ENCODE measurements at regions of chr9 and their contacts with region 1.

Region 1: DNA sequence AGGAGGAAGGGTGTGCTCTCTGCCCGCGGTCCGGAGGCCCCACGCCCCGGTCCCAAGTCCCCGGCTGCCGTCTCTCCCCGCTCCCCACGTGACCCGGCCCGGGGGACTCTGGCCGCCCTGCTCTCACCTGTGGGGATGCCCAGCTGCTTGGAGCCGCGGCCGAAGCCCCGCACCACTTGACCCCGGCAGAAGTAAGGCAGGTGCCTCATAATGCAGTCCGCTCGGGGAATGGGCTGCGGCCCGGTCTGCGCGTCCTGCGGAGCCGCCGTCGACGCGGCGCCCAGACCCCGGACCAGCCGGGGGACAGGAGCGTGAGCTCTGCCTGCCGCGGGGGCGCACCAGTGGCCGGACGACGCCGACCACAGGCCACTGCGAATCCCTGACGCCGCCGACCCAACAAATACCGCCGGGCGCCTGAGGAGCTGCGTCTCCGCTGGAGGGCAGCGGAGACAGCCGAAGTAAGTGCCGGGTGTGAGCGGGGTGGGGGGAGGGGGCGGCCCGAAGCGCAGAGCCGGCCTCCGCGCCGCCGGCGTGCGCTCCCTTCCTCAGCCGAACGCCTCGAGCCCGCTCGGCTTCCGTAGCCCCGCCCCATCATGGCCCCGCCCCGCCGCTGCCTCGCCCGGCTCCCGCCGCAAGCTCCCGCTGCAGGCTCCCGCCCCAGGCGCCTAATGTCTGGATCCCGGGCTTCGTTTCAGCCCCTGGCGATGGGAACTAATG is at the start of gene RFK:
- DNase-seq: peak; percentile 89
- H3K4me3 Mint-ChIP-seq: peak within 1 kb of the TSS; percentile 100
- H3K27ac Mint-ChIP-seq: peak within 1 kb of the TSS; percentile 100
- H3K4me1 Mint-ChIP-seq: peaks cover 26% of the 10 kb centered on the region
- H3K27me3 Mint-ChIP-seq: no peaks in the 10 kb centered on the region
- total RNA-seq, gene RFK: 14.9 and 17.1 TPM in 2 replicates

Region 2: DNA sequence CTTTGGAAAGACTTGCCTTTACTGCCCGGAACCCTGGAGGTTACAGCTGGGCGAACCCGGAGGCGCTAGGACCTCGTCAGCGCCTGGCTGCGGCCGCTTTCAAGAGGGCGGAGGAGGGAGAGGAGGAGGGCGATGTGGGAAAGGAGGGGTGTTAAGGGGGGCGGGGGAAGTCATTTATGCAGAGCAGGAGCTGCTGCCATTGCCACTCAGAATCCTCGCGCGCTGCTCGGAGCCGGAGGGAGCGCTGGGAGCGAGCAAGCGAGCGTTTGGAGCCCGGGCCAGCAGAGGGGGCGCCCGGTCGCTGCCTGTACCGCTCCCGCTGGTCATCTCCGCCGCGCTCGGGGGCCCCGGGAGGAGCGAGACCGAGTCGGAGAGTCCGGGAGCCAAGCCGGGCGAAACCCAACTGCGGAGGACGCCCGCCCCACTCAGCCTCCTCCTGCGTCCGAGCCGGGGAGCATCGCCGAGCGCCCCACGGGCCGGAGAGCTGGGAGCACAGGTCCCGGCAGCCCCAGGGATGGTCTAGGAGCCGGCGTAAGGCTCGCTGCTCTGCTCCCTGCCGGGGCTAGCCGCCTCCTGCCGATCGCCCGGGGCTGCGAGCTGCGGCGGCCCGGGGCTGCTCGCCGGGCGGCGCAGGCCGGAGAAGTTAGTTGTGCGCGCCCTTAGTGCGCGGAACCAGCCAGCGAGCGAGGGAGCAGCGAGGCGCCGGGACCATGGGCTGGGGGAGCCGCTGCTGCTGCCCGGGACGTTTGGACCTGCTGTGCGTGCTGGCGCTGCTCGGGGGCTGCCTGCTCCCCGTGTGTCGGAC is 503.4 kb before region 1 on chr9 and contains the start of gene PCSK5:
- intact Hi-C with region 1: loop called (anchors 2 kb)
- DNase-seq: peak; percentile 77
- H3K4me3 Mint-ChIP-seq: peak within 1 kb of the TSS; percentile 92
- H3K27ac Mint-ChIP-seq: peak within 1 kb of the TSS; percentile 32
- H3K4me1 Mint-ChIP-seq: peaks cover 24% of the 10 kb centered on the region
- H3K27me3 Mint-ChIP-seq: peaks cover 55% of the 10 kb centered on the region
- total RNA-seq, gene PCSK5: 1.5 TPM in 2 replicates

Region 3: DNA sequence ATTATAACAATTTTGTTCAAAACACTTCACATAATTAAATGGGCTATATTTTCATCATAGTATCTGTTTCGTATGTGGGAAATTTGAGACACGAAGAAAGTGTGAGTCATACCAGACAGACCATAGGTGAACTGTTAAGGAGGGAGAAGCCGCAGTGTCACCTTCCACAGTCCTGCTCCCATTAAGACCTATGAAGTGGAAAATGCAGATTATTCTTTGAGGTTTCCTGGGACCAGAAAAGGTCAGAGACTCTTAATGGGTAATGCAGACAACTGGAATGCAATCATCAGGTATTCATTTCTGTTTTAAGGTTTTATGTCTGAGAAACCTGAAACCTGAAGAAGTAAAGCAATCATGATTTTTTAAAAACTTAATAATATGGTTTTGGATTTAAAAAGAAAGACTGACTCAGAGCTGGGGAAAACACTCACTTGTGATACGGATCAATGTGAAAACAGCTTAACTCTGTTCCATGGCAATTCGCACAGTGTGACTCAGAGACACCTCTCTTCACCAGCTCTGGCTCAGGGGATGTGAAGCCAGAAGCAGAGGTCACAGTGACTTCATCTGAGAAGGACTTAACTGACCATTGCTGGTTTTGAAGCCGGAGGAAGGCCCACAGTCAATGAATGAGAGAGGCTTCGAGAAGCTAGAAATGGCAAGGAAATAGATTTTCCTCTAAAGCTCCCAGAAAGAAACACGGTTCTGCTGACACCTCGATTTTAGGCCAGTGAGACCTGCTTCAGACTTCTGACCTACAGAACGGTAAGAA is 47.6 kb after region 1 on chr9:
- intact Hi-C with region 1: loop called (anchors 2 kb)
- DNase-seq: peak; percentile 19
- H3K4me3 Mint-ChIP-seq: peak overlapping the region; percentile 88
- H3K27ac Mint-ChIP-seq: peak overlapping the region; percentile 99
- H3K4me1 Mint-ChIP-seq: peaks cover 65% of the 10 kb centered on the region
- H3K27me3 Mint-ChIP-seq: no peaks in the 10 kb centered on the region

Region 4: DNA sequence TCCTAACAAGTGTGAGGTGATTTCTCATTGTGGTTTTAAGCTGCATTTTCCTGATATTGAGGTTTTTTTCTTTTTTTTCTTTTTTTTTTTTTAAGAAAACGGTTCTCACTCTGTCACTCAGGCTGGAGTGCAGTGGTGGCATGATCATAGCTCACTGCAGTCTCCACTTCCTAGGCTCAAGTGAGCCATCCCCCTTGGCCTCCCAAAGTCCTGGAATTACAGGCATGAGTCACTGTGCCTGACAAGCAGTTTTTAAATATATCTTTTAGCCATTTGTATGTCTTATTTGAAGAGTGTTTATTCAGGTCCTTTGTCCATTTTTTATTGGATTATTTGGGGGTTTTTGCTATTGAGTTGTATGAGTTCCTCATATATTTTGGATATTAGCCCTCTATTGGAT is 118.7 kb after region 1 on chr9:
- intact Hi-C with region 1: no loop called
- DNase-seq: no peak
- H3K4me3 Mint-ChIP-seq: no peak overlapping the region
- H3K27ac Mint-ChIP-seq: no peak overlapping the region
- H3K4me1 Mint-ChIP-seq: peaks cover 13% of the 10 kb centered on the region
- H3K27me3 Mint-ChIP-seq: peaks cover 11% of the 10 kb centered on the region

Region 5: DNA sequence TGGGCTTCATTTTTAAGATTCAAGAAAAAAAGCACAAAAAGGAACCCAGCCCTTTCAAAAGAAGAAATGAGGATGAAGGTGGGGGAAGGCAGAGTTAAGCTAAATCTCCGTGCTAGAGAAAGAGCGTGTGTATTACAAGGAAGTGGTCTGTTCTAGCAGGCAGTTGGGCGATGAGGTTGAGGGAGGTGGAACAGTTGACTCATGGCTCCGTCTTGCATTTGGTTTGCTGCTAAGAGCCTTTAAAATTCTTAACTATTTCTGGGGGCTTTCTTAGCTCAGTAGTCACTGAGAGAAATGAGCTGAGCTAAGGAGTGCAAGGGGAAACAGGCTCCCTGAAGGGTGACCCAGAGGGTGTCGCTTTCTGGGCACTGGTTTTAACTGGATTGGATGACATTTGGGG is 182.2 kb after region 1 on chr9:
- intact Hi-C with region 1: loop called (anchors 5 kb)
- DNase-seq: peak; percentile 57
- H3K4me3 Mint-ChIP-seq: no peak overlapping the region
- H3K27ac Mint-ChIP-seq: peak overlapping the region; percentile 73
- H3K4me1 Mint-ChIP-seq: peaks cover 29% of the 10 kb centered on the region
- H3K27me3 Mint-ChIP-seq: peaks cover 5% of the 10 kb centered on the region

Region 6: DNA sequence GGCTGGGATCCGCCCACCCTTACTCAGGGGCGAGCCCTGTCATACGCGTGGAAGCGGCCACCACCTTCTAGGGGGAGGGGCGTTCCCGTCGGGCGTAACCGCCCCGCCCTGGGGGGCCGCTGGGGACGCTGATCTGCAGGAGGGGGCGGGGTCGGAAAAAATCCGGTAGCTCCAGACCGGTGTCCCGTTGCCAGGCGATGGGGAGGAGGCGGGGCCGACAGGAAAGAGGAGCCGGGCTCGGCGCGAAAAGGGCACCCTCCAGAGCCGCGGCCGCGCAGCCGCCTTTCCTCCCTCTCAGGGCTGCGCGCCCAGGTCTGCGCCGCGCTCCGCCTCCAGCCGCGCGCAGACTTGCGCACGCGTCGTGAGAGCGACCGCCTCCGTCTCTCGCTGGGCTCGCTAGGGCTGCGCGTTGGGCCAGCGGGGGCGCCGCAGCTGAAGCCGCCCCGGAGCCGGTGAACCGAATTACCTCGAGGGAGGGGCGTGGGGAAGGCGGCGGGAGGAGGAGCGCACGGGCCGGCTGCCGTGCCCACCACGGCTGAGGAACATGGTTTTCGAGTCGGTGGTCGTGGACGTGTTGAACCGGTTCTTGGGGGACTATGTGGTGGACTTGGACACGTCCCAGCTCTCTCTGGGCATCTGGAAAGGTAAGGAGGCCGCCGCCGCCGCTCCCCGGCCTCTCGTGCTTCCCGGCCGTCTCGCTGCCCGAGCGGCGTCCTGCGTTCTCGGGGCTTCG is 783.2 kb after region 1 on chr9 and contains the start of gene VPS13A:
- intact Hi-C with region 1: loop called (anchors 10 kb)
- DNase-seq: peak; percentile 93
- H3K4me3 Mint-ChIP-seq: peak within 1 kb of the TSS; percentile 91
- H3K27ac Mint-ChIP-seq: peak within 1 kb of the TSS; percentile 90
- H3K4me1 Mint-ChIP-seq: peaks cover 27% of the 10 kb centered on the region
- H3K27me3 Mint-ChIP-seq: peaks cover 12% of the 10 kb centered on the region
- total RNA-seq, gene VPS13A: 43.8 and 46.9 TPM in 2 replicates

Measured in activated T-helper 2 cell treated with anti-CD3 and anti-CD28 coated beads, Interferon-gamma antibody, Interleukin-2, Interleukin-4, amounts not matched to agents 10 μg/mL and 5 μg/mL and 100 μg/mL, durations not matched to agents 14 hours and 24 hours and 36 hours (primary cell).